PC-3 (cell line): ENCODE measurements at regions of chr9 and their contacts with region 1.

Region 1: DNA sequence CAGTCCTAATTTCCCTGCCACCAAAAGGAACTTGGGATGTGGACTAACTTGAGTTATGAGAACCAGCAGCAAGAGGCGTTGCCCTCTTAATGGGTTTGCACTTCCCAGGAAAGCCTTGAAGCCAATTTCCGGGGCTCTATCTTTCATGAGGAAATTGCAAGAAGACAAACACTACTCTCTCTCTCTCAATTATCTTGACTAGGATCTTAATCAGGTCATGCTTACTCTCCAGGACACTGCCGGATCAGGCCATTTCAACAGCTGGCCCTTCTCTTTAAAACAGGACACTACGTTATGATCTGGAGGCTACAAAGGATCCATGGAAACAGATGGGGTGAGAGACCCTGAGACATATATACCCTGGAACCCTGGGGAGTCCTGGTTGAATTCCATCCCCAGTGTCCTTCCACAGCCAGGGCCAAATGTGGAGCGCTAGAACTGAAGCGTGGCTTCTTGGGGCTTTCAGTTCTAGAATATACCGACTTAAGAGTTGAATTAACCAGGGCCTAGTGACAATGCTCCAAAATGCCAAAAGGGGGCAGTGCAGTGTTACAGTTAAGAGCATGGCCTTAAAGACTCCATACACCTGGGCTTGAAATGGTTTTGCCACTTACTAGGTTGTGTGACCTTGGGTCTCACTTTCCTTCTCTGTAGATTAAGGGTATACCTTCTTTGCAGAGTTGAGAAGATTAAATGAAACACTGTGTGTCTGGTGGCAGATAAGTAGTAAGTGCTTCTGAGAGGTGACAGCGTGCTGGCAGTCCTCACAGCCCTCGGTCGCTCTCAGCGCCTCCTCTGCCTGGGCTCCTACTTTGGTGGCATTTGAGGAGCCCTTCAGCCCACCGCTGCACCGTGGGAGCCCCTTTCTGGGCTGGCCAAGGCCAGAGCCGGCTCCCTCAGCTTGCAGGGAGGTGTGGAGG is 21.1 kb downstream of the FAM219A start:
- DNase-seq: peak; percentile 79
- ATAC-seq: peak; percentile 78
- H3K4me3 ChIP-seq: no peak overlapping the region
- H3K27ac ChIP-seq: no peak overlapping the region
- H3K4me1 ChIP-seq: peaks cover 7% of the 10 kb centered on the region; the same call in 1 of the 2 replicates
- H3K27me3 ChIP-seq: no peaks in the 10 kb centered on the region
- CTCF ChIP-seq: peak; percentile 79

Region 2: DNA sequence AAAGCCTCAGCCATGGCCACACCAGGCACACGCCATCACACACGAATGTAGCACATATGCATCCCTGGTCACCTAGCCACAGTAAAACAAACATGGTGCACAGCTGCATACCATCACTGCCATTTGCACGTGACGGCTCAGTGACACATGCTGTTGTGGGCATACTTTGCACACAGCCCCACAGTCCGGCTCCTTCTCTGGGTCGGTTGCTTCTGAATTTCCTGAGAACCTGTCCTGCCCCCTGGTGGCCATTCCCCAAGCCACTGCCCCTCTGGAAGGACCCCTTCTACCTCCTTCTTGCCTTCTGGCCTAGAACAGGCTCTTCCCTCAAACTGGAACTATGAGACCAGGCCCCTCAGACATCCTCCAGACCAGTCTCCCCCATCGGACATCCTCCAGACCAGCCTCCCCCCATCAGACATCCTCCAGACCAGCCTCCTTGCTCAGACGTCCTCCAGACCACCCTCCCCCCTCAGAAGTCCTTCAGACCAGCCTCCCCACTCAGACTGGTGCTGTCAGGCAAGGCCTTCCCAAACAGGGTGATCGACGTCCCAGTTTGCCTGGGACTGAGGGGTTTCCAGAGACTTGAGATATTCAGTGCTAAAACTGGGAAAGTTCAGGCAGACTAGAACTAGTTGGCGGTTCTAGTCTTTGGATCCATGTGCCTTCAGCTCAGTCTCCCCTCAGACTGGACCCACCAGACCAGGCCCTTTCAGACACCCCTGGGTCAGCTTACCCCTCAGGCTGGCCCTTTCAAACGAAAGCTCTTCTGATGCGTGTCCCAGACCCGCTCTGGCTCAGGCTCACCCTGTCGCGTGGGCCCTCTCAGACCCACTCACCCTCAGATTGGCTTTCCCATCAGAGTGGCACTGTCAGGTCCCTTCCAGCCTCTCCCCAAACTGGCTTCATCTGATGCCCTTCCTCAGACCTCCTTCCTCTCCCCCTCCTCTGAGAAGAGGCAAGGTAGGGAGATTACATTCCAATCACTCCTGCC is 109.9 kb after region 1 on chr9:
- CTCF ChIA-PET with region 1: no interaction called
- POLR2A ChIA-PET with region 1: no interaction called
- intact Hi-C with region 1: loop called (anchors 1 kb)
- DNase-seq: peak; percentile 74
- ATAC-seq: peak; percentile 63
- H3K4me3 ChIP-seq: no peak overlapping the region
- H3K27ac ChIP-seq: no peak overlapping the region
- H3K4me1 ChIP-seq: no peaks in the 10 kb centered on the region
- H3K27me3 ChIP-seq: no peaks in the 10 kb centered on the region
- CTCF ChIP-seq: peak; percentile 76

Region 3: GRCh38 chr9:34578241-34579103 is 141.2 kb after region 1 on chr9:
- CTCF ChIA-PET with region 1: no interaction called
- POLR2A ChIA-PET with region 1: no interaction called
- intact Hi-C with region 1: no loop called
- DNase-seq: no peak
- ATAC-seq: no peak
- H3K4me3 ChIP-seq: no peak overlapping the region
- H3K27ac ChIP-seq: no peak overlapping the region
- H3K4me1 ChIP-seq: no peaks in the 10 kb centered on the region
- H3K27me3 ChIP-seq: no peaks in the 10 kb centered on the region
- CTCF ChIP-seq: no peak

Region 4: GRCh38 chr9:34591248-34591916 is 154.1 kb after region 1 on chr9:
- CTCF ChIA-PET with region 1: no interaction called
- POLR2A ChIA-PET with region 1: no interaction called
- intact Hi-C with region 1: loop called (anchors 5 kb)
- DNase-seq: peak; percentile 71
- ATAC-seq: peak; percentile 90
- H3K4me3 ChIP-seq: no peak overlapping the region
- H3K27ac ChIP-seq: no peak overlapping the region
- H3K4me1 ChIP-seq: no peaks in the 10 kb centered on the region
- H3K27me3 ChIP-seq: peaks cover 51% of the 10 kb centered on the region
- CTCF ChIP-seq: peak; percentile 65